Naive thymus-derived CD4-positive, alpha-beta T cell (primary cell): ENCODE measurements at regions of chr14 and their contacts with region 1.

Region 1: GRCh38 chr14:89630101-89630829 is 213.2 kb upstream of the FOXN3 start:
- DNase-seq: no peak
- ATAC-seq: no peak
- H3K4me3 ChIP-seq: no peak overlapping the region
- H3K4me3 Mint-ChIP-seq: peak overlapping the region in 4 of 10 donors; percentile 27 to 69 (median 54)
- H3K27ac ChIP-seq: no peak overlapping the region
- H3K27ac Mint-ChIP-seq: peak overlapping the region in 8 of 9 donors; percentile 6 to 94 (median 84)
- H3K4me1 ChIP-seq: peaks cover 18 to 22% of the 10 kb centered on the region in 2 donors
- H3K4me1 Mint-ChIP-seq: peaks cover 24 to 67% (median 52%) of the 10 kb centered on the region in 7 donors
- H3K27me3 ChIP-seq: no peaks in the 10 kb centered on the region
- H3K27me3 Mint-ChIP-seq: no peaks in the 10 kb centered on the region

Region 2: GRCh38 chr14:89540830-89541470 is 89.3 kb before region 1 on chr14:
- CTCF ChIA-PET with region 1: no interaction called
- POLR2A ChIA-PET with region 1: no interaction called
- intact Hi-C with region 1: no loop called
- DNase-seq: no peak
- ATAC-seq: no peak
- H3K4me3 ChIP-seq: no peak overlapping the region
- H3K4me3 Mint-ChIP-seq: no peak overlapping the region
- H3K27ac ChIP-seq: no peak overlapping the region
- H3K27ac Mint-ChIP-seq: peak overlapping the region in 3 of 9 donors; percentile 22 to 45 (median 34)
- H3K4me1 ChIP-seq: peaks cover 0 to 14% of the 10 kb centered on the region in 2 donors
- H3K4me1 Mint-ChIP-seq: peaks cover 30 to 89% (median 80%) of the 10 kb centered on the region in 7 donors
- H3K27me3 ChIP-seq: no peaks in the 10 kb centered on the region
- H3K27me3 Mint-ChIP-seq: no peaks in the 10 kb centered on the region

Region 3: GRCh38 chr14:89641495-89642175 is 11.4 kb after region 1 on chr14:
- CTCF ChIA-PET with region 1: interaction called, 5 read pairs
- POLR2A ChIA-PET with region 1: interaction called, 25 read pairs
- intact Hi-C with region 1: no loop called
- DNase-seq: peak in 6 of 9 donors; percentile 25 to 52 (median 36)
- ATAC-seq: peak; percentile 88
- H3K4me3 ChIP-seq: peak overlapping the region; percentile 42
- H3K4me3 Mint-ChIP-seq: peak overlapping the region; percentile 58 to 87 (median 74)
- H3K27ac ChIP-seq: peak overlapping the region; percentile 81
- H3K27ac Mint-ChIP-seq: peak overlapping the region; percentile 75 to 99 (median 96)
- H3K4me1 ChIP-seq: peaks cover 13 to 45% of the 10 kb centered on the region in 2 donors
- H3K4me1 Mint-ChIP-seq: peaks cover 23 to 74% (median 60%) of the 10 kb centered on the region in 7 donors
- H3K27me3 ChIP-seq: no peaks in the 10 kb centered on the region
- H3K27me3 Mint-ChIP-seq: no peaks in the 10 kb centered on the region